ENCODE measurements at regions of chr3 and their contacts with region 1.

Region 1: GRCh38 chr3:119498186-119498987 is at the start of gene TIMMDC1:
- DNase-seq: peak; percentile 96 to 98 (median 97)
- H3K4me3 ChIP-seq: peak within 1 kb of the TSS; percentile 82 to 93
- H3K4me3 Mint-ChIP-seq: peak within 1 kb of the TSS; percentile 98 to 100 (median 99)
- H3K27ac ChIP-seq: peak within 1 kb of the TSS; percentile 92
- H3K27ac Mint-ChIP-seq: peak within 1 kb of the TSS; percentile 99 to 100 (median 100)
- H3K4me1 ChIP-seq: peaks cover 31% of the 10 kb centered on the region
- H3K4me1 Mint-ChIP-seq: peaks cover 13 to 42% (median 33%) of the 10 kb centered on the region in 4 donors
- H3K27me3 ChIP-seq: no peaks in the 10 kb centered on the region
- H3K27me3 Mint-ChIP-seq: no peaks in the 10 kb centered on the region
- total RNA-seq, gene TIMMDC1: 72.3 to 80.9 TPM

Region 2: DNA sequence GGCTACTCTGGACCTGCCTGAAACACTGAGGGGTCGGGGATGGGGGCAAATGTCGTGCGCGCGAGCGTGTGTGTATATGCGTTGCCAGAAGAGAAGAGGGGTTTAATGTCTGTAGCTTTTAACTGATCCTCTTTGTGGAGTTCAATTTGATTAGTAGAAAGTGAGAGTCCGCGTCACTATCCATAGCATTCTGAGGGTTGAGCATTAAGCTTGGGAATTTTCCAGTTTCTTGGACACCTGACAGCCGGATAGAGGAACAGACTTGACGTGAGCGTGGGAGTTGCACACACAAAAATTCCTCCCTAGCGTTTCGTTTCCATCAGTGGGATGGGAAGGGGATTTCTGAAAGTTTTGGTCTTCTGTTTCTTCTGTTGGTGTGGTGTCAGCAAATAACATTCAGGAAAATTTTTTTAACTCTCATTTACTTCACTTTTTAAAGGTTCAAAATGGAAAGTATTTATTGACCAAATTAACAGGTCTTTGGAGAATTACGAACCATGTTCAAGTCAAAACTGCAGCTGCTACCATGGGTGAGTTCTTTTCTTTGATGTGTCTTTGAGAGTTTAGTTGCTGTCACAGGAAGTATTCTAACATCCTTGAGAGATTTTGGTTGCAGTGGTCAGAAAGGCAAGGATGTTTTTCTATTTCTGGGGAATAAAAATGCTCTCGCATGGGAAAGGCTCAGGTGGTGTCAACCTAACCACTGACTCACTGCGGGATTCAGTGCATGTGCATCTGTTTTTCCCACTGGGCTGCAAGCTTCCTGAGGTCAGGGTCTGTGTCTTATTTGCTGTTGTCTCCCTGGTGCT is 28.8 kb before region 1 on chr3:
- CTCF ChIA-PET with region 1: interaction called, 6 read pairs
- POLR2A ChIA-PET with region 1: interaction called, 204 read pairs
- intact Hi-C with region 1: loop called (anchors 1 kb)
- DNase-seq: peak in 3 of 5 donors; percentile 5 to 21 (median 15)
- H3K4me3 ChIP-seq: peak overlapping the region; percentile 70 to 84
- H3K4me3 Mint-ChIP-seq: peak overlapping the region; percentile 92 to 98 (median 97)
- H3K27ac ChIP-seq: peak overlapping the region; percentile 92
- H3K27ac Mint-ChIP-seq: peak overlapping the region; percentile 79 to 97 (median 93)
- H3K4me1 ChIP-seq: peaks cover 24% of the 10 kb centered on the region
- H3K4me1 Mint-ChIP-seq: peaks cover 19 to 33% (median 28%) of the 10 kb centered on the region in 4 donors
- H3K27me3 ChIP-seq: no peaks in the 10 kb centered on the region
- H3K27me3 Mint-ChIP-seq: no peaks in the 10 kb centered on the region

Region 3: DNA sequence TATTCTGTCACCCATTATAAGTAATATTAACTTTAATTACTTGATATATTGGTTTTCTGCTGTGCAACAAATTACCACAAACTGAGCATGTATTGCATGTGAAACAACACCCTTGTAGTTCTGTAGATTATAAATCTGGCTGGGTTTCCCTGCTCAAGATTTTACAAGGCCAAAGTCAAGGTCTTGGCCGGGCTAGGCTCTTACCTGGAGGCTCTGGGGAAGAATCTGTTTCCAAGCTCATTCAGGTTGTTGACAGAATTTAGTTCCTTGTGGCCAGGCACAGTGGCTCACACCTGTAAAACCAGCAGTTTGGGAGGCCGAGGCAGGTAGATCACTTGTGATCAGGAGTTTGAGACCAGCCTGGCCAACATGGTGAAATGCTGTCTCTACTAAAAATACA is 16.2 kb after region 1 on chr3:
- CTCF ChIA-PET with region 1: no interaction called
- POLR2A ChIA-PET with region 1: no interaction called
- intact Hi-C with region 1: no loop called
- DNase-seq: no peak
- H3K4me3 ChIP-seq: no peak overlapping the region
- H3K4me3 Mint-ChIP-seq: no peak overlapping the region
- H3K27ac ChIP-seq: no peak overlapping the region
- H3K27ac Mint-ChIP-seq: peak overlapping the region in 1 of 7 donors; percentile 13
- H3K4me1 ChIP-seq: no peaks in the 10 kb centered on the region
- H3K4me1 Mint-ChIP-seq: peaks cover 0 to 2% (median under 1%) of the 10 kb centered on the region in 4 donors
- H3K27me3 ChIP-seq: no peaks in the 10 kb centered on the region
- H3K27me3 Mint-ChIP-seq: no peaks in the 10 kb centered on the region